AG04449 (cell line): ENCODE measurements at regions of chr2 and their contacts with region 1.

Region 1: GRCh38 chr2:30711646-30712085 is 95.6 kb downstream of the CAPN13 start:
- DNase-seq: peak; percentile 49
- H3K4me3 ChIP-seq: no peak overlapping the region
- CTCF ChIP-seq: peak; percentile 98

Region 2: DNA sequence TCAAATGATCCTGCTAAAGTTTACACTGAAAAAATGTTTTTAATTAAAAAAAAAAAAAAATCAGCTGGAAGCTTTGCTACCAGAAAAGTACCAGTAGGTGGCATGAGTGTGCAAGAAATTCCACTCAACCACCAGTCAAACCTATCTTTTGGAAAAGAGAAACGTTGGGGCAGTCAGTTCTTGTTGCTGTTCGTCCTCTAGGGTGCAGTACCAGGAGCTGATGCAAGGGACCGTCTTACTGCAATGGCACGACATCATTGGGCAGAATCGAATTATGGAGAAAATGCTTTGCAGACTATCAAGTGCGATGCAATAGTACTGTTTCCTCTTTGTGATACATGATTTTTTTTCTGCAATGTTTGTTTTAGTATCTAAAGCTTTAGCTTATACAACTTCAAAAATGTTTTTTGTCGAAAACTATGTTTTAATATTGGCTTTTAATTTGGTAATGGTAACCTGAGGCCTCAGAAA is 546.6 kb before region 1 on chr2:
- CTCF ChIA-PET with region 1: interaction called, 799 read pairs
- POLR2A ChIA-PET with region 1: interaction called, 6 read pairs
- DNase-seq: peak; percentile 76
- H3K4me3 ChIP-seq: no peak overlapping the region
- CTCF ChIP-seq: peak; percentile 76

Region 3: DNA sequence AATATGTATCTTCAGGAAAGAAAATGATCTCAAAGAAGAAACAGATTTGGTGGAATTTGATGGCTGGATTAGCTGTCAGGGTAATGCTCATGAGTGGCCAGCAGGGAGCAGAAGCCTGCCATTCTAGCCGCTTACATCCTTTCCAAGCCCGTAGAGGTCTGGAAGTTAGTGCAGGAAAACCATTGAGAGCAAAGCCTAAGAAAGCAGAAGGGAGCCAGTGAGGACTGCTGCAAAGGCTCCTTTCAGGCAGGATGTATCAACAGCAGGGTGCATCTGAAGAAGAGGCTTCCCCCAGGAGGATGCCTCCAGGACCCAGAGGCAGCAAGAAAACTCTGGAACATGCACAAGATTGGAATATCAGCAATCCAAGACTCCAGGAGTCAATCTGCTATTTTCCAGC is 503.2 kb before region 1 on chr2:
- CTCF ChIA-PET with region 1: interaction called, 504 read pairs
- POLR2A ChIA-PET with region 1: no interaction called
- DNase-seq: peak; percentile 53
- H3K4me3 ChIP-seq: no peak overlapping the region
- CTCF ChIP-seq: peak; percentile 81

Region 4: GRCh38 chr2:30239308-30239985 is 472.2 kb before region 1 on chr2:
- CTCF ChIA-PET with region 1: interaction called, 35 read pairs
- POLR2A ChIA-PET with region 1: interaction called, 3 read pairs
- DNase-seq: peak; percentile 45
- H3K4me3 ChIP-seq: no peak overlapping the region
- CTCF ChIP-seq: peak; percentile 97

Region 5: DNA sequence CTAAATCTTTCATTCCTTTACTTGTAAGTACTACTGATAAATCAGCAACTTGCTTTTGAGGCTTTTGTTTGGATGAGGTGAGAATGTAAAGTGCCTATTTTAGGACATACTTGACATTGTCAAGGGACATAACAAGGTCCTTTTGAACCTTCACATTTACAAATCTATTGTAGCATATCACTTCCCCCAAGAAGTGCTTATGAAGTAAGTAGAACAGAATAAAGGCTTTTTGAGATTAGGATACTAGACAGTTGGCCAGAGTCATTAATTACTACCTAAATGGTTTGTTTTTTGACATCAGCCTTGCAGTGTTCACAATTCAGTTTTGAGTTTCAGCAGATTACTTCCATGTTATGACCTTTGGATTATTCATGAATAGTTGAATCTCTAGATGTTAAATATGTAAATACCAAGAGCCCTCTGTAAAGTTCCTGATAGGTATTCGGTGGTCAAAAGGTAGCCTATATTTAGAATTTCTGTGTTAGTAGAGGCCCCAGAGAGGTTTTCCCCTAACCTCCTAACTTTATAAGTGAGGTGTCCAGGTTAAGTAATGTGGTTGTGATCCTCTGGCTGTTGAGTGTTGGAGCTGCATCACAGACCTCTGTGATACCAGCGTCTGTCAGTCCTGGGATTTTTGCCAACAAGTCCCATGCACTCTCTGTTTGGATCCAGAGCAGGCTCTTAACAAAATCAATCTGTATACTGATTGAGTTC is 197.4 kb before region 1 on chr2:
- CTCF ChIA-PET with region 1: no interaction called
- POLR2A ChIA-PET with region 1: no interaction called
- DNase-seq: no peak
- H3K4me3 ChIP-seq: no peak overlapping the region
- CTCF ChIP-seq: no peak

Region 6: DNA sequence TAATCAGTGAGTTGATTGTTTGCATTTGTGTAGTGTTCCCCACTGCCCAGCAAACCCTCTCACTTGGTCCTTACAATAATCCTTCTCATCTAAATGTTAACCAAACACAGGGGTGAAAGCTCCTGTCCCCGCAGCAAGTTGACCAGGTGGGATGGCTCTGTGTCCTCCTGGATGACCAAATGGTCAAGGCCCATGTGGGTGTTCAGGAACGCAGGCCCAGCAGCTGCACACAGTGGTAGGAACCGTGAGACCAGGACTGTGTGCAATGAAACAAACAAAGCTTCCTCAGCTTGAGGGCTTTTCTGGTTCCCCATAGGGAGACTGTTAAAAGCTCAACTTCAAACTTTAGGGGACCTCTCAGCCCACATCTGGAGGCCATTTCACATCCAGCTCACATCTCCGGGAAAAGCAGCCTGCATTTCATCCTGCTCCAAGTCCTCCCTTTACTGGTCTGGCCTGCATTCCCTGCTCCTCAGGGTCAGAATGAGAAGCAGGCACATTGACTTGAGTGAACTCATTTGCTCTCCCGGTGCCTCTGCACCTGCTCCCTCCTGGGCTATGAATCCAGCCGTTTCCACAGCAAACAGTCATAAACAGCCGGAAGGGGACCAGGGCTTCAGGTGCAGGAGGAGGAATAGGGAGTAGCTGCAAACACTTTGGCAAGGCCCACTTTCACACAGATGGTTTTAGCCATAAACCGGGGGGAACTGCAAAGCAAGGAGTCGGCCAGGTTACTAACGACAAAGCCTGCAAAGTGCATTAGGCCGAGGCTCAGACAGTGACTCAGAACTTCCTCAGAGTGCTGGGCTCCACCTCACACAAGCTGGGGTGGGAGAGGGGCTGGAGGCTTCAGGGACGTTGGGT is 49.2 kb before region 1 on chr2:
- CTCF ChIA-PET with region 1: interaction called, 12 read pairs
- POLR2A ChIA-PET with region 1: no interaction called
- DNase-seq: no peak
- H3K4me3 ChIP-seq: no peak overlapping the region
- CTCF ChIP-seq: no peak

Region 7: DNA sequence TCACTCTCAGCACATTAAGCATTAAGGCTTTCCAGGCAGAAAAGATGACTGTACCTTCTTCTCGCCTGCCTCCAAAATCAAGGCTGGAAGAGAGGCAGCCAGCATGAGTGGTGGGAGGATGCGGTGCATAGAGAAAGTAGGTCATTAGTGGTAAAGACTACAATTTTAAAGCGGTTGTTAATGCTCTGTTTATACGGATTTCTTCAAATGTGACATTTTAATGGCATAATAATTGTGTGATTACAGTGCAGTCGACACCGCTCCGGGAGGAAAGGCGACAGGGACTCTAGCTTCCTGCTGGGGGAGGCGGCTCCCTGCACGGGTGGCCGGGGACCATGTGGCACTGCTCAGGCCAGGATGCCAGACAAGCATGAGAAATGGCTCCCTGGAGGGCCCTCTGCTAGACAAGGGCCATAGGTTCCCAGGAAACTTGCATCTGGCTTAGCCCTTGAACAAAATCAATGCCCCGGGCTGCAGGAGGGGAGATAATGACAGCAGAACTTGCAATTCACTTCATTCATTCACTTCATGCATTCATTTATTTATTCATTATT is 297.0 kb after region 1 on chr2:
- CTCF ChIA-PET with region 1: no interaction called
- POLR2A ChIA-PET with region 1: no interaction called
- DNase-seq: no peak
- H3K4me3 ChIP-seq: no peak overlapping the region
- CTCF ChIP-seq: no peak

Region 8: GRCh38 chr2:31170071-31170698 is 458.5 kb after region 1 on chr2:
- CTCF ChIA-PET with region 1: interaction called, 89 read pairs
- POLR2A ChIA-PET with region 1: no interaction called
- DNase-seq: peak; percentile 5
- H3K4me3 ChIP-seq: no peak overlapping the region
- CTCF ChIP-seq: peak; percentile 94